ENCODE measurements at regions of chr16 and their contacts with region 1.

Region 1: DNA sequence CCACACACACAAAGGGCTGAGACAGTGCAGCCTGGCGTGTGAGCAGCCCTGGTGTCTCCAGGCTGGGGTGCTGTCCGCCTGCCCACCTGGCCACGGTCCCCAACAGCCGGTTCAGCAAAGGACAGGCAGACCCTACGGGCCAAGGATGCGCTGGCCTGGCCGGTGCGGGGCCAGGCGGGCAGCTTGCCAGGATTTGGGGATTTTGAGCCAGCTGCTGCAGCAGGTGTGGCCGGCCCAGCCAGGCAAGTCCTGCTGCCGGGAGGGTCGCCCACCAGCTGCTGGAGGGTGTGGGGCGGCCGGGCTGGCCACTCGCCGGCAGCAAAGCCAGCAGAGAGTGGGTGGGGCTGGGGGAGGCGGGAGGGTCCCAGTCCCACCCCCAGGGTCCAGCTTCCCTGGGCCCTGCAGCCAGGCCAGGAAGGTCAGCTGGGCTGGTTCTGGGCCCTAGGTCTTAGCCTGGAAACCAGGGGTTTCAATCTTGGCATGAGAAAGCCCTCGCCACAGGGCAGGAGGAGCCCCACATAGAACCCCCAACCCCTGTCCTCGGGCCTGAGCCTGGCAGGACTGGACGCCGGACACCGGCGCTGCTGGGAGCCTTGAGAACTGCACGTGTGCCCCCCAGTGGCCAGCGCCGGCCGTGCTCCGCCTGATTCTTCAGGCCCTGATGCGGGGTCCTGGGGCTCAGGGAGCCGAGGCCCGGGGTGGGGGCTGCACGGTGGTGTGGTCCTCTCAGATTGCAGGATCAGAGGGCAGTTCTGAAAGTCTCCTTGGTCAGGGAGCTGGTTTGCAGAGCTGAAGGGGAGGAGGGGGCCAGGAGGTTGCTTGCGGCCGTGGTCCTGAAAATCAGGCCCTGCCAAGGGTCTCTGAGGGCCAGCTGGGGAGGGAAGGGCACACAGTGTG is 17.6 kb upstream of the SSTR5 start:
- DNase-seq: peak; percentile 57 to 77
- ATAC-seq: peak; percentile 74 to 88
- H3K4me3 ChIP-seq: no peak overlapping the region
- H3K27ac ChIP-seq: no peak overlapping the region
- H3K4me1 ChIP-seq: peaks cover 13% of the 10 kb centered on the region
- CTCF ChIP-seq: peak; percentile 83
- EP300 ChIP-seq: no peak
- POLR2A ChIP-seq: no peak
- RAD21 ChIP-seq: peak; percentile 90 to 97

Region 2: DNA sequence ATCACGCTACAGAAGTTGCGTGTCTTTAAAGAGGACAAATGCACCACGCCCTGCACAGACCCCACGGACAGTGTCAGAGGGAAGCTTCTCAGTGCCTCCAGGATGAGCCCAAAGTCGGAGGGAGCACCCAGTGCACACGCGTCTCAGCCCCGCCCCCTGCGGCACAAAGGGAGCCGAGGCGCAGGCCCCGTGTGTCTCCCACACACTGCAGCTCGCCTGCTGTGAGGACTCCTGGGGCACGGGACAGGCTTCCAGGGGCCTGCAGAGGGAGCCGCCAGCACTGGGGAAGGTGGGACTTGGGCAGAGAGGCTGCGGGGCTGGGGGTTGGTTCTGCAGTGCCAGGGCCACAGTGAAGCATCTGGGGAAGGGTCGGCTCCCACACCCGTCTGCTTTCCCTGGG is 161.5 kb before region 1 on chr16:
- CTCF ChIA-PET with region 1: interaction called, 11 read pairs
- POLR2A ChIA-PET with region 1: no interaction called
- DNase-seq: peak in 1 of 2 experiments; percentile 27
- ATAC-seq: peak in 1 of 2 experiments; percentile 67; a peak in 3 of 6 replicates
- H3K4me3 ChIP-seq: no peak overlapping the region
- H3K27ac ChIP-seq: no peak overlapping the region
- H3K4me1 ChIP-seq: no peaks in the 10 kb centered on the region
- CTCF ChIP-seq: no peak
- EP300 ChIP-seq: no peak
- POLR2A ChIP-seq: no peak
- RAD21 ChIP-seq: no peak

Region 3: GRCh38 chr16:982145-983043 is 72.5 kb before region 1 on chr16:
- CTCF ChIA-PET with region 1: interaction called, 37 read pairs
- POLR2A ChIA-PET with region 1: no interaction called
- DNase-seq: peak in 1 of 2 experiments; percentile 40
- ATAC-seq: peak in 1 of 2 experiments; percentile 17; a peak in 3 of 6 replicates
- H3K4me3 ChIP-seq: peak overlapping the region; percentile 59
- H3K27ac ChIP-seq: peak overlapping the region in 1 of 2 experiments; percentile 74; a peak in 3 of 6 replicates
- H3K4me1 ChIP-seq: peaks cover 12% of the 10 kb centered on the region
- CTCF ChIP-seq: no peak
- EP300 ChIP-seq: no peak
- POLR2A ChIP-seq: no peak
- RAD21 ChIP-seq: no peak

Region 4: DNA sequence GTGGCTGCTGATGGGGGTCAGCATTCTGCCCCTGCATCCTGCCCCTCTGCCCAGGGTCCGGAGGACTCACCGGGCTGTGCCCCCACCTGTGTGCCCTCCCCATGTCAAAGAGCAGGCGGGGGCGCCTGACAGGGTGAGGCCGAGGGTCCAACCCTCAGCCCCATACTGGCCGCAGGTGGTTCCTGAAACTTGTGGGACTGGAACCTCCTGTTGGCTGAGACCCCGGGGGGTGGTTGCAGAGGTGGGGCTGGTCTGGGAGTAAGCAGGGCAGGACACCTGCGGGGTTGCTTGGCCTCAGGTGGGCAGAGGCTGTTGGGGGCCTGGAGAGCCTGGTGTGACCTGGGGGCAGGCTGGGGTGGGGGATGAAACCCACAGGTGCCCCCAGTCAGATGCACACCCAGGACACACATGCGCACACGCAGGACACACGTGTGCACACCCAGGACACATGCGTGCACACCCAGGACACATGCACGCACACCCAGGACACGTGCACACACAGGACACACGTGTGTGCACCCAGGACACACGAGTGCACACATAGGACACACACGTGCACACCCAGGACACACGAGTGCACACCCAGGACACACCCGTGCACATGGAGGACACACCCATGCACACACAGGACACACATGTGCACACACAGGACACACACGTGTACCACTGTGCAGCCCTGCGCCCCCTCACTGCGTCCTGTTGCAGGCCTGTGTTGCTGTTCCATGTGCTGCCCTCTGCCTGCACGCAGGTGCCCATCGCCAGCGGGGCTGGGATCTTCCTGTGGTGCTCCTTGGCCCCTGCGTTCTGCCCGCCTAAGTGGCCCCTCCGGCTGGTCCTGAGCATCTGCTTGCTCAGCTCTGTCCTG is 42.0 kb before region 1 on chr16:
- CTCF ChIA-PET with region 1: interaction called, 32 read pairs
- POLR2A ChIA-PET with region 1: no interaction called
- DNase-seq: no peak
- ATAC-seq: peak; percentile 31 to 47; a peak in 4 of 6 replicates
- H3K4me3 ChIP-seq: no peak overlapping the region
- H3K27ac ChIP-seq: no peak overlapping the region
- H3K4me1 ChIP-seq: no peaks in the 10 kb centered on the region
- CTCF ChIP-seq: no peak
- EP300 ChIP-seq: no peak
- POLR2A ChIP-seq: no peak
- RAD21 ChIP-seq: no peak

Region 5: DNA sequence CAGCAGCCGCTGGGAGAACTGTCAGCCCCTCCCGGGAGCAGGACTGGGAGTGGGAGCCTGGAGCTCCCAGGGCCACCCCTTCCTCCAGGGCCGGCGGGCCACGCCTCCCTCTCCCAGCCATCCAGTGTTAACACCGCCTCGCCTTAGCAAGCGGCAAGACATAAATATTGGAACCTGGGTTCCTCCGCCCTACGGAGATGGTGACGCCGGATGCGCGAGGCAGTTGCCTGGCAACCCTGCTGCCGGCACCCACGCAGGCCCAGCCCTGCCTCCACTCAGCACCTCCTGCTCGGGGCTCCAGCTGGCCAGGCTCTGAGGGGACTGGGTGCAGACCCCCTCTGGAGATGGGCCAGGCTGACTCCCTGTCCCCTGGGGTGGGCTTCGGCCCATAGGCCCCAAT is 70.6 kb after region 1 on chr16:
- CTCF ChIA-PET with region 1: interaction called, 15 read pairs
- POLR2A ChIA-PET with region 1: no interaction called
- DNase-seq: peak in 1 of 2 experiments; percentile 66
- ATAC-seq: peak; percentile 22 to 77; a peak in 3 of 6 replicates
- H3K4me3 ChIP-seq: no peak overlapping the region
- H3K27ac ChIP-seq: no peak overlapping the region
- H3K4me1 ChIP-seq: no peaks in the 10 kb centered on the region
- CTCF ChIP-seq: no peak
- EP300 ChIP-seq: no peak
- POLR2A ChIP-seq: no peak
- RAD21 ChIP-seq: no peak